MCF 10A (cell line): ENCODE measurements at regions of chr1 and their contacts with region 1.

Region 1: DNA sequence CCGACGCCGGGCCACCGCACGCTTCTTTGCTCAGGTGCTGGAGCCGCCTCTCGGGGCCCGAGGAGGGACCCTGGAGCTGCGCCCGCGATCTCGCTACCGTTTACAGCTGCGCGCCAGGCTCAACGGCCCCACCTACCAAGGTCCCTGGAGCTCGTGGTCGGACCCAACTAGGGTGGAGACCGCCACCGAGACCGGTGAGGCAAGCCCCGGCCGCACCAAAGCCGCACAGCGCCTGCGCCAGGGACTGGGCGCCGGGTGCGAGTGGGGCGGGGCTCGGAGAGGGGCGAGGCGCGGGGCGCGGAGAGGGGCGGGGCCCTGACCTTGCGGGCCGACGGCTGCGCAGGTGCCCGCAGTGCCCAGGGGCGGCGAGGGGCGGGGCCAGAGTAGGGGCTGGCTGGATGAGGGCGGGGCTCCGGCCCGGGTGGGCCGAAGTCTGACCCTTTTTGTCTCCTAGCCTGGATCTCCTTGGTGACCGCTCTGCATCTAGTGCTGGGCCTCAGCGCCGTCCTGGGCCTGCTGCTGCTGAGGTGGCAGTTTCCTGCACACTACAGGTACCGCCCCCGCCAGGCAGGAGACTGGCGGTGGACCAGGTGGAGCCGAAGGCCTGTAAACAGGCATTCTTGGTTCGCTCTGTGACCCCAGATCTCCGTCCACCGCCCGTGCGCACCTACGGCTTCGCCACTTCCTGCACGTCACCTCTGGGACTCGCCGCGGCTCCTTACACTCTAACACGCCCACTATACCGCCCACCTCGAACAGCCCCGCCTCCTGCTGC is 9.8 kb upstream of the CDC20 start:
- DNase-seq: peak; percentile 88
- H3K4me3 Mint-ChIP-seq: peak overlapping the region; percentile 82
- H3K27ac Mint-ChIP-seq: peak overlapping the region; percentile 96
- H3K4me1 Mint-ChIP-seq: peaks cover 21% of the 10 kb centered on the region
- H3K27me3 Mint-ChIP-seq: no peaks in the 10 kb centered on the region
- CTCF ChIP-seq: no peak

Region 2: DNA sequence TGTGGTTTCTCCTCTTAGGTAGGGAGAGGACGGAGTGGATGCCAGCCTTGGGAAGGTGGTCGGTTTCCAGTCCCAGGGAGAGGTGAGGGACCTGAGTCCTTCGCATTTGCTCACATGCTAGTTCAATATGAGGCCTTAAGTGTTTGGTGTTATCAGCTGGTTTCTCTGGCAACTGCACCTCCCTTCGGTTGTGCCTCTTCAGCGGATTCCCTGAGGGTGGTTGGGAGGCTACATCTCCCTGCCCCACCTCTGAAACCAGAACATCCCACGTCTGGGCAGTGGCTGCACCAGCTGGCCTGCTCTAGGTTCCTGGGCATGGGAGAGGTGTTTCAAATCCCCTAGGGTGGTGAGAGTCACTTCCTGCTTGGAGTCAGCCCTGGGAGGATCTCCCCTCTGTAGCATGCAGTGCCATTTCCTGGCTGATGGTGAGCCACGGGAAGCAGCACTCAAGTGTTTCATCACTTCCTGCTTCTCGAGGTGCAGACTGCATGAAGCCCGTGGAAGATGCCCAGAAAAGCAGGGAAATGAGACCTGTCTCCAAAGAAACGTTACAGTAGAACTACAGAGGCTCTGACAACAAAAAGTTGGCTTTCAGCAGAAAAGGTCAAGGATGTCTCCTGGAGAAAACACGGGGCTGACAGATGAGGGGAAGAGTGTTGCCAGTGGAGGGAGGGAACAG is 74.7 kb before region 1 on chr1:
- CTCF ChIA-PET with region 1: no interaction called
- POLR2A ChIA-PET with region 1: no interaction called
- intact Hi-C with region 1: no loop called
- DNase-seq: peak; percentile 24
- H3K4me3 Mint-ChIP-seq: no peak overlapping the region
- H3K27ac Mint-ChIP-seq: no peak overlapping the region
- H3K4me1 Mint-ChIP-seq: peaks cover 9% of the 10 kb centered on the region
- H3K27me3 Mint-ChIP-seq: peaks cover 11% of the 10 kb centered on the region
- CTCF ChIP-seq: no peak

Region 3: GRCh38 chr1:43317817-43318471 is 31.1 kb before region 1 on chr1:
- CTCF ChIA-PET with region 1: no interaction called
- POLR2A ChIA-PET with region 1: no interaction called
- intact Hi-C with region 1: no loop called
- DNase-seq: no peak
- H3K4me3 Mint-ChIP-seq: no peak overlapping the region
- H3K27ac Mint-ChIP-seq: peak overlapping the region; percentile 46
- H3K4me1 Mint-ChIP-seq: no peaks in the 10 kb centered on the region
- H3K27me3 Mint-ChIP-seq: no peaks in the 10 kb centered on the region
- CTCF ChIP-seq: no peak

Region 4: GRCh38 chr1:43367904-43368645 is 19.1 kb after region 1 on chr1 and contains the start of gene ELOVL1:
- CTCF ChIA-PET with region 1: no interaction called
- POLR2A ChIA-PET with region 1: interaction called, 11 read pairs
- intact Hi-C with region 1: no loop called
- DNase-seq: peak; percentile 85
- H3K4me3 Mint-ChIP-seq: peak within 1 kb of the TSS; percentile 87
- H3K27ac Mint-ChIP-seq: peak within 1 kb of the TSS; percentile 84
- H3K4me1 Mint-ChIP-seq: peaks cover 33% of the 10 kb centered on the region
- H3K27me3 Mint-ChIP-seq: no peaks in the 10 kb centered on the region
- CTCF ChIP-seq: no peak
- total RNA-seq, gene ELOVL1: 86.0 and 99.9 TPM in 2 replicates